ENCODE measurements at regions of chr18 and their contacts with region 1.

Region 1: GRCh38 chr18:8948471-8949149 is 153.9 kb upstream of the NDUFV2 start:
- DNase-seq: no peak
- H3K4me3 ChIP-seq: peak overlapping the region; percentile 27 to 39 (median 36)
- H3K27ac ChIP-seq: peak overlapping the region; percentile 74 to 89 (median 86)
- H3K4me1 ChIP-seq: peaks cover 3 to 34% (median 30%) of the 10 kb centered on the region in 4 donors
- H3K27me3 ChIP-seq: no peaks in the 10 kb centered on the region
- CTCF ChIP-seq: no peak
- EP300 ChIP-seq: no peak
- POLR2A ChIP-seq: no peak

Region 2: GRCh38 chr18:8800449-8800848 is 148.2 kb before region 1 on chr18:
- intact Hi-C with region 1: loop called (anchors 10 kb)
- DNase-seq: no peak
- H3K4me3 ChIP-seq: peak overlapping the region; percentile 17 to 42 (median 28)
- H3K27ac ChIP-seq: peak overlapping the region; percentile 84 to 93 (median 89)
- H3K4me1 ChIP-seq: peaks cover 6 to 65% (median 54%) of the 10 kb centered on the region in 4 donors
- H3K27me3 ChIP-seq: no peaks in the 10 kb centered on the region
- CTCF ChIP-seq: no peak
- EP300 ChIP-seq: peak; percentile 59
- POLR2A ChIP-seq: no peak

Region 3: DNA sequence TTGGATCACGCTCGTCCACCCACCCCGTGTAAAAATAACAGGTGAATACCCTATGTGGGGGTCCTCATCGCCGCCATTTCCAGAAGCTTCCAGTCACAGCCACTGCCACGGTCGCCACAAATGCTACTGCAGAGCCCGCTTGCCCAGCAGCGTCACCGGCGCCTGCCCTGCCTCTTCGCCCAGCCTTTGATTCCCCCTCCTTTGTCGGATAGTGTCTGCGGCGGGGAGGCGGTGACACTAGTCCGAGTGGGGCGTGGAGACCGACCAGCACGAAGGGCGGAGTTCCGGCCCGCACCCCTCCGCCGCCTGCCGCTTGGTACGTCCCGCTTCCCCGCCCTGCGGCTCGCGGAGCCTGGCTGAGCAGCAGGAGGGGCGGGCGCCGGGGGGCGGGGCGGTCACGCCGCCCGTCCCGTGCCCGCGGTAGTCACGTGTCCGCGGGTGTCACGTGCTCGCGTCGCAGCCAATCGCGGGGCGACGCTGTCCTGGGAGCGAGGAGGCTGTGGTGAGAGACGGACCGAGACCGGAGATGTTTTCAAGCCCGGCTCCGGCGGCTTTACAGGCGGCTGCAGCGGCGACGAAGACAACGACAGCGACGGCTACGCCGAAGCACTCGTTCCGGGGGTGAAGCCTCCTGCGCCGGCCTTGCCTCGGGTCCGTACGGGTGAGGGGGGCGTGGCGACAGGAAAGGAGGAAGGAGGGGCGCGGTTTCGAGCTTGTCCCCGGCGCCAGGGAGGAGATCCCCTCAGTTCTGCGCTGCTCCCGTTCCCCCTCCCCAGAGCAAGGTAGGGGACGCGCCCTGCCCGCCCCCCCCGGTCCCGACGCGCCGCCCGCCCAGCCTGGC is 187.9 kb after region 1 on chr18 and contains the start of gene ANKRD12:
- intact Hi-C with region 1: loop called (anchors 5 kb)
- DNase-seq: peak; percentile 99
- H3K4me3 ChIP-seq: peak within 1 kb of the TSS; percentile 71 to 89 (median 83)
- H3K27ac ChIP-seq: peak within 1 kb of the TSS; percentile 96 to 99 (median 98)
- H3K4me1 ChIP-seq: peaks cover 47 to 67% (median 61%) of the 10 kb centered on the region in 4 donors
- H3K27me3 ChIP-seq: no peaks in the 10 kb centered on the region
- CTCF ChIP-seq: no peak
- EP300 ChIP-seq: no peak
- POLR2A ChIP-seq: peak; percentile 86
- total RNA-seq, gene ANKRD12: 65.2 to 108 (median 92.9) TPM